RWPE1 (cell line): ENCODE measurements at regions of chr5 and their contacts with region 1.

Region 1: DNA sequence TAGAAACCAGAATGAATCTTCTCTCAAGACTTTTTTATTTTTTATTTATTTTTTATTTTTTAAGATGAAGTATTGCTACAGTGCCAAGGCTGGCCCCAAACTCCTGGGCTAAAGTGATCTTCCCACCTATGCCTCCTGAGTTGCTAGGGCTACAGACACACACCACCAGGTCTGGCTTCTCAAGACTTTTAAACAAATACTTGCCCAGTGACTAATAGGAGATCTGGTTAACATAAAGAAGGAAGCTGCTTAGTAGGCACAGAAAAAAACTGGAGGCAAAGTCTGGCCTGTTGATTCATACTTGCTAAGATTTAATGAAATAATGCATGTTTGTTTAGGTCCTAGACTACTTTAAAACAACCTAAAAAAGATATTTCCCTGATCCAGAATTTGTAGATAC is 43.8 kb downstream of the SLC38A9 start:
- DNase-seq: peak; percentile 85
- H3K27ac ChIP-seq: no peak overlapping the region
- CTCF ChIP-seq: no peak

Region 2: GRCh38 chr5:55900068-55900467 is 231.7 kb after region 1 on chr5:
- CTCF ChIA-PET with region 1: interaction called, 10 read pairs
- POLR2A ChIA-PET with region 1: no interaction called
- DNase-seq: no peak
- H3K27ac ChIP-seq: no peak overlapping the region
- CTCF ChIP-seq: no peak